ENCODE measurements at regions of chr2 and their contacts with region 1.

Region 1: DNA sequence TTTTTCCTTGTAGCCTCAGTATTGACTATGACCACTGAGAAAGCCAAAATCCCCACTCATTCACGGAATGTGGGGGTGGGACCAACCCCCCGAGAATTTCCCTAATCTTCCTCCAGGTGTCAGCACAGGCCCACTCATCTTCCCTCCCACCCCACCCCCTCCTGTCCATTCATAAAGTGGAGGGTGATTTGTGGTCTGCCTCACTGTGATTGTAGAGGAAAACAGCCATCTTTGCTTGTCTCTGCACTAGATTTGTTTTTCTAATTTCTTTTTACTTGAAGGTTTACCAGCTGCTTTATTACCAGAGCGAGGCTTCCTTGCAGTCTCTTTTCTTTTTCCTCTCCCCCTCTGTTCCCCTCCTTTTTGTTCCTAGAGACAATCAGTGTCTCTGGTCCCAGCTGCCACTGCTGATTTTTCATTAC is 171.8 kb downstream of the ICOS start:
- DNase-seq: peak; percentile 72
- H3K4me3 Mint-ChIP-seq: peak overlapping the region; percentile 71
- H3K27ac Mint-ChIP-seq: peak overlapping the region; percentile 96
- H3K4me1 Mint-ChIP-seq: peaks cover 75% of the 10 kb centered on the region
- H3K27me3 Mint-ChIP-seq: peaks cover 2% of the 10 kb centered on the region

Region 2: GRCh38 chr2:203934041-203934492 is 174.3 kb before region 1 on chr2:
- CTCF ChIA-PET with region 1: interaction called, 5 read pairs
- intact Hi-C with region 1: loop called (anchors 1 kb)
- DNase-seq: peak; percentile 78
- H3K4me3 Mint-ChIP-seq: peak overlapping the region; percentile 51
- H3K27ac Mint-ChIP-seq: peak overlapping the region; percentile 96
- H3K4me1 Mint-ChIP-seq: peaks cover 64% of the 10 kb centered on the region
- H3K27me3 Mint-ChIP-seq: no peaks in the 10 kb centered on the region

Region 3: DNA sequence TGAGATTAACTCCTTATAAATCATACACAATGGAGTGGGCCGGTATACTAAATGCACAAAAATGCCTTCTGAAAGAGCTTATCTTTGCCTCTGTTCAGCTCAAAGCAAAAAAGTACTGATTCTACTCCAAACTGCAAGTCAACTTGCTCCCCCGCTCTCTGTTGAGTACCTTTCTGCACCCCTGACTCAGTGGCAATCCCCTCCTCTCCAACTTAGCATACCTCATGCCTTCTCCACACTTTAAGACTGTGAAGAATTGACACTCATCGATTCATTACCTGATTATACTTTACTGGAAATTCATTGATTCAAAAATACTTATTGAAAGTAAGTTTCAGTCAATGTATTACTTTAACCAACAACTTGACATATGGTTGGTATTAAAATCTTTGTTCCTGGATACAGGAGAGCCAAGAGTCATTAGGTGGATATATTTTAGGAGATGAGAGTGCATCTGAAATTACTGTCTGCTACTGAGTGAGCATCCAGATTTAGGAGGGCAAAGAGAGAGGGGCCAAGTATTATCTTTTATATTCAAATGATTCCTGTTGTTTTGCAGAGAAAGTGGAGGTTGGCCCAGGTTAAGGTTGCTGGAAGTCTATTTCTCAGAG is 15.9 kb after region 1 on chr2:
- CTCF ChIA-PET with region 1: interaction called, 4 read pairs
- intact Hi-C with region 1: loop called (anchors 1 kb)
- DNase-seq: peak; percentile 48
- H3K4me3 Mint-ChIP-seq: no peak overlapping the region
- H3K27ac Mint-ChIP-seq: no peak overlapping the region
- H3K4me1 Mint-ChIP-seq: peaks cover 20% of the 10 kb centered on the region
- H3K27me3 Mint-ChIP-seq: peaks cover 11% of the 10 kb centered on the region

Region 4: DNA sequence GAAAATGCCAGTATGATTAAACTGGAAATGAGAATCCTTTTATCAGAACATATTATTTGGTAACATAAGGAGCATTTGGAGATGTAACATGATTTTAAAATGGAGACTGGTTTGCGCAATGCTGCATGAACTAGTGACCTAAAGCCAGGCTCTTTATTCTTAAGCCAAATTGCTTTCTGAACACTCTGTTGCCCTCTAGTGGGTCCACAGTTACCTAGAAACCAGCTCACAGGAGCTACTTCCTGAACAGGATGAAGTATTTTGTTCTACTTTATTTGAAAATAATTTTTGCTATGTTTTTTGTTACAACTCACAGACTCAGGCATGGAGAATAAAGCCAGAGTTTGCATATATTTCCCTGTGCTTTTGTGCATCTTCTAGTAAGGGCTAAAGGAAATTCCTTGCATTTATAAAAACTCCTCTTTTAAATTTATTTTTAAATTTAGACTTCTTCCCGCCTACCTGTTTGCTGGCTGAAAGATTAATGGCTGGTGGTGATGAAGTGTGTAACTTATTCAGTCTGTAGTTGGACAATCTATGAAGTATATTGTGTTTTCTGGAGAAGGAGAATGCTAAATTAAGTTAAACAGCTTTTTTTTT is 583.7 kb after region 1 on chr2:
- CTCF ChIA-PET with region 1: interaction called, 3 read pairs
- intact Hi-C with region 1: loop called (anchors 1 kb)
- DNase-seq: peak; percentile 63
- H3K4me3 Mint-ChIP-seq: no peak overlapping the region
- H3K27ac Mint-ChIP-seq: no peak overlapping the region
- H3K4me1 Mint-ChIP-seq: peaks cover 7% of the 10 kb centered on the region
- H3K27me3 Mint-ChIP-seq: no peaks in the 10 kb centered on the region

Region 5: GRCh38 chr2:205077159-205077558 is 968.8 kb after region 1 on chr2:
- CTCF ChIA-PET with region 1: no interaction called
- intact Hi-C with region 1: loop called (anchors 2 kb)
- DNase-seq: peak; percentile 9
- H3K4me3 Mint-ChIP-seq: peak overlapping the region; percentile 46
- H3K27ac Mint-ChIP-seq: peak overlapping the region; percentile 50
- H3K4me1 Mint-ChIP-seq: peaks cover 53% of the 10 kb centered on the region
- H3K27me3 Mint-ChIP-seq: no peaks in the 10 kb centered on the region

Region 6: GRCh38 chr2:205868773-205869333 is 1760.5 kb after region 1 on chr2:
- CTCF ChIA-PET with region 1: no interaction called
- intact Hi-C with region 1: loop called (anchors 2 kb)
- DNase-seq: peak; percentile 78
- H3K4me3 Mint-ChIP-seq: no peak overlapping the region
- H3K27ac Mint-ChIP-seq: peak overlapping the region; percentile 25
- H3K4me1 Mint-ChIP-seq: peaks cover 18% of the 10 kb centered on the region
- H3K27me3 Mint-ChIP-seq: peaks cover 42% of the 10 kb centered on the region